ENCODE measurements at regions of chr17 and their contacts with region 1.

Region 1: DNA sequence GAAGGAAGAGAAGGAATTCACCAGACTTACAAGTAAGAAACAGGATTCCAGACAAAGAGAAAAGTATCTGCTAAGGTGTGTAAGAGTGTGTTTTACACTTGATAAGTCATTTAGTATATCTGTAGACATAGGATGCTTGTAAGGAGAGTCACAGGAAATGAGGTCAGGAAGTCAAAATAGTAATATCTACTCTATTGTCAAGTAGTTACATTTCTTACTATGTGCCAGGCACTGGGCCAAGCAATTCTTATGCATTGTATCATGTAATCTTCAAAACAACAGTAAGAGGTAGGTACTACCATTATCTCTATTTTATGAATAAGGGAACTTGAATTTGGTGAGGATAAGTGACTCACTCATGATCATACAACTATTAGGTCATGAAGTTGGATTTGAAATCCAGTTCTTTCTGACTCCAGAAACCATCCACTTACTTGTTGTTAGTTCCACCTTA is 129.1 kb downstream of the SNX11 start:
- DNase-seq: peak; percentile 22 to 83
- H3K4me3 ChIP-seq: no peak overlapping the region
- H3K27ac ChIP-seq: peak overlapping the region; percentile 47
- H3K4me1 ChIP-seq: peaks cover 59% of the 10 kb centered on the region
- H3K27me3 ChIP-seq: no peaks in the 10 kb centered on the region
- CTCF ChIP-seq: no peak

Region 2: DNA sequence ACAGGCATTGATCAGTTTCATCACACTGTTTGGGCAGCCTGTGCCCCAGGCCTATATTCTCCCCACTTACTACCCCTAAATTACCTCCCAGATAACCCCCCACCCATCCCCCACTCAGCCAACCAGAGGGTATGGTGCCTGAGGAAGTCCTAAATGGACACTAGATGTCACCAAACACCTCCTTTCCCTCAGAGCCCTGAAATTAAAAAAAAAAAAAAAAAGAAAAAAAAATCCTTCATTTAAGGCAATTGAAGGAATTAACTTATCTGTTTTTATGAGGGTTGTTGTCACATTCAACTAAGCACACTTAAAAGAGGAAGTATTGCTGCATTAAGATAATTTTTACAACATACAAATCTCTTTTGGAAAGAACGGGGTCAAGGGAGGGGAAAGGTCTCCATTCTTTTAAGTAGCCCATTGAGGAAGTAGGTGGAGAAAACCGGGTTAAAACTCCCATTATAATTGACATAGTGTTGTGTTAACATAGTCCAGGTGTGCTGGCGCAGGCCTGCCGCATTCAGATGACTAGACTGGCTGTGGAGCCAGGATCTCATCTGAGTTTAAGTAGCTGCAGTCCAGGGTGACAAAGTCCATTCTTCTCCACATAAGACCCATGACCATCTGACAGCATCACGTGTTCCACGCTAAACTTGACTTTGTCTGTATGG is 82.9 kb before region 1 on chr17:
- CTCF ChIA-PET with region 1: no interaction called
- POLR2A ChIA-PET with region 1: interaction called, 22 read pairs
- intact Hi-C with region 1: no loop called
- DNase-seq: peak; percentile 27 to 64
- H3K4me3 ChIP-seq: no peak overlapping the region
- H3K27ac ChIP-seq: no peak overlapping the region
- H3K4me1 ChIP-seq: no peaks in the 10 kb centered on the region; the same call in 1 of the 2 replicates
- H3K27me3 ChIP-seq: peaks cover 33% of the 10 kb centered on the region; the same call in 1 of the 2 replicates
- CTCF ChIP-seq: peak; percentile 80

Measured in PC-9 (cell line).